ENCODE measurements at regions of chr15 and their contacts with region 1.

Region 1: GRCh38 chr15:101088788-101089583 is 162.9 kb downstream of the CHSY1 start:
- DNase-seq: peak; percentile 74
- ATAC-seq: peak; percentile 91
- H3K4me3 ChIP-seq: peak overlapping the region; percentile 55
- H3K27ac ChIP-seq: no peak overlapping the region
- H3K4me1 ChIP-seq: no peaks in the 10 kb centered on the region
- H3K27me3 ChIP-seq: no peaks in the 10 kb centered on the region
- CTCF ChIP-seq: peak; percentile 91

Region 2: DNA sequence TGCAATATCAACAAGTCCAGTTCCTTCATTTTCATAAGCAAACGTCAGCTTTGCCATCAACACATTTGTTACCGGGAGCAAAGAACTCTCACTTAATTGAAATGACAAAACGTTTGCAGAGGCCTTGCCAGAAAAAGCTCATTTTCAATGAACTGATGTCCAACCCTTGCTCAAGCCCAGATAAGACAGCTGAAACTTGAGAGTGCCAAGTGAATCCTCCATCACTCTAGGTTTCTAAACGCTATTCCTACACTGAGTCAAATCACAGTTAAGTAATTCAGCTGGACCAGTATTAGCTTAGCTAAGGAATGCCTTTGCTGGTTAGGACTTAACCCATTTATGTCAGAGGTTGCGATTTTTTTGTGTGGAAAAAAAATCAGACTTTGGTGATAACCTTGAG is 151.4 kb after region 1 on chr15:
- CTCF ChIA-PET with region 1: no interaction called
- POLR2A ChIA-PET with region 1: no interaction called
- intact Hi-C with region 1: no loop called
- DNase-seq: no peak
- ATAC-seq: no peak
- H3K4me3 ChIP-seq: no peak overlapping the region
- H3K27ac ChIP-seq: no peak overlapping the region
- H3K4me1 ChIP-seq: no peaks in the 10 kb centered on the region; the same call in 1 of the 2 replicates
- H3K27me3 ChIP-seq: no peaks in the 10 kb centered on the region
- CTCF ChIP-seq: no peak

Region 3: GRCh38 chr15:101258238-101259144 is 169.5 kb after region 1 on chr15:
- CTCF ChIA-PET with region 1: interaction called, 3 read pairs
- POLR2A ChIA-PET with region 1: no interaction called
- intact Hi-C with region 1: loop called (anchors 1 kb)
- DNase-seq: peak; percentile 80
- ATAC-seq: peak; percentile 87
- H3K4me3 ChIP-seq: peak overlapping the region; percentile 34; the same call in 1 of the 2 replicates
- H3K27ac ChIP-seq: no peak overlapping the region
- H3K4me1 ChIP-seq: no peaks in the 10 kb centered on the region
- H3K27me3 ChIP-seq: no peaks in the 10 kb centered on the region
- CTCF ChIP-seq: peak; percentile 95